ENCODE measurements at regions of chr17 and their contacts with region 1.

Region 1: GRCh38 chr17:67475236-67475937 is 98.3 kb downstream of the PITPNC1 start:
- DNase-seq: peak; percentile 91
- ATAC-seq: peak; percentile 76
- H3K4me3 Mint-ChIP-seq: peak overlapping the region; percentile 72
- H3K27ac Mint-ChIP-seq: peak overlapping the region; percentile 94
- H3K4me1 Mint-ChIP-seq: peaks cover 72% of the 10 kb centered on the region
- H3K27me3 Mint-ChIP-seq: no peaks in the 10 kb centered on the region

Region 2: DNA sequence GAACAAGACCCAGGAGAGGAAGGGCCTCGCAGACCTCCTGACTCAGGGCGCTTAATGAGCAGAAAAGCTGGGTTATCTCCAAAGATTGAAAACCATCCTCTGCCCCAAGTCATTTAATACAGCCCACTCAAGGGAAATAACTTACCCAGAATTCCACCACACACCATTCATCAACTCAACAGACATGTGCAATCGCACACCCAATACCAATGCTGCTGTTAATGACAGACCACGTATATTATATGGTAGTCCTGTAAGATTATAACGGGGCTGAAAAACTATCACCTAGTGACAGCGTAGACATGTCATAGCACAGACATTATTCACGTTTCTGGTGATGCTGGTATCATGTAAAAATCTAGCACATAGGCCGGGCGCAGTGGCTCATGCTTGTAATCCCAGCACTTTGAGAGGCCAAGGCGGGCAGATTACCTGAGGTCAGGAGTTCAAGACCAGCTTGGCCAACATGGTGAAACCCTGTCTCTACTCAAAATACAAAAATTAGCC is 177.9 kb before region 1 on chr17:
- CTCF ChIA-PET with region 1: no interaction called
- POLR2A ChIA-PET with region 1: no interaction called
- DNase-seq: no peak
- ATAC-seq: no peak
- H3K4me3 Mint-ChIP-seq: no peak overlapping the region
- H3K27ac Mint-ChIP-seq: no peak overlapping the region
- H3K4me1 Mint-ChIP-seq: peaks cover 7% of the 10 kb centered on the region
- H3K27me3 Mint-ChIP-seq: no peaks in the 10 kb centered on the region

Region 3: GRCh38 chr17:67401598-67402488 is 73.5 kb before region 1 on chr17:
- CTCF ChIA-PET with region 1: interaction called, 11 read pairs
- POLR2A ChIA-PET with region 1: interaction called, 4 read pairs
- DNase-seq: no peak
- ATAC-seq: peak; percentile 48
- H3K4me3 Mint-ChIP-seq: peak overlapping the region; percentile 59
- H3K27ac Mint-ChIP-seq: peak overlapping the region; percentile 85
- H3K4me1 Mint-ChIP-seq: peaks cover 73% of the 10 kb centered on the region
- H3K27me3 Mint-ChIP-seq: no peaks in the 10 kb centered on the region

Region 4: DNA sequence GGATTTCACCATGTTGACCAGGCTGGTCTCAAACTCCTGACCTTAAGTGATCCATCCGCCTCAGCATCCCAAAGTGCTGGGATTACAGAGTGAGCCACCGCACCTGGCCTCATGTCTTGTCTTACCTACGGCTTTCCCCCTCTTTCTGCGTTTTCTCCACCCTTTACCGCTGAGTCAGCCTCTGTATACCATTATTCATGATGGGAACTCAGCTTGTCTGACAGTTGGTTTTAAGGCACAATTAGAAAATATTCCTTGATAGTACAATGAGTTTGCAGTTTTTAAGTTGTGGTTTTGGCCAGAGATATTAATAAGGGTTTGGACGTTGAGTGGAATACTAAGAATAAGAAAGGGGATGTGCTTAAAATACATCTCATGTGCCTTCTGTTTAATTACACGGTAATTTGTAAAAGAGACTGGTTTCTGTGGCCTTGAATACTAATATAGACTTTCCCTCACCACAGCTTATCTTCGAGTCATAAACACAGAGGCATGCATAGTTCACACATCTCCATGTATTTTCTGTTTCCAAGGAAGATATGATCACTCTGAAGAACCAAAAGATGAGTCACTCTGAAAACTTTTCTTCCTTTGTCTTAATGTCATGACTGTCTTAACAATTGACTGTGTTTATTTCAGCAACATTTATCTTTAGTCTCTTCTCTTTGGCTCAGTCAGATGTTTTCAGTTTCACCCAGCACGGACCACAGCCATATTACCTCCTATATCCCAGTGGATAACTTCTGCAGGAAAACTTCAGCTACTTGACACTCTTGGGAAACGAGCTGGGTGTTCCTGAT is 43.9 kb before region 1 on chr17:
- CTCF ChIA-PET with region 1: interaction called, 65 read pairs
- POLR2A ChIA-PET with region 1: interaction called, 8 read pairs
- DNase-seq: no peak
- ATAC-seq: peak; percentile 31
- H3K4me3 Mint-ChIP-seq: peak overlapping the region; percentile 20
- H3K27ac Mint-ChIP-seq: peak overlapping the region; percentile 39
- H3K4me1 Mint-ChIP-seq: peaks cover 73% of the 10 kb centered on the region
- H3K27me3 Mint-ChIP-seq: no peaks in the 10 kb centered on the region

Region 5: GRCh38 chr17:67452681-67453554 is 22.5 kb before region 1 on chr17:
- CTCF ChIA-PET with region 1: interaction called, 57 read pairs
- POLR2A ChIA-PET with region 1: interaction called, 31 read pairs
- DNase-seq: peak; percentile 68
- ATAC-seq: peak; percentile 84
- H3K4me3 Mint-ChIP-seq: peak overlapping the region; percentile 67
- H3K27ac Mint-ChIP-seq: peak overlapping the region; percentile 96
- H3K4me1 Mint-ChIP-seq: peaks cover 88% of the 10 kb centered on the region
- H3K27me3 Mint-ChIP-seq: no peaks in the 10 kb centered on the region

Region 6: DNA sequence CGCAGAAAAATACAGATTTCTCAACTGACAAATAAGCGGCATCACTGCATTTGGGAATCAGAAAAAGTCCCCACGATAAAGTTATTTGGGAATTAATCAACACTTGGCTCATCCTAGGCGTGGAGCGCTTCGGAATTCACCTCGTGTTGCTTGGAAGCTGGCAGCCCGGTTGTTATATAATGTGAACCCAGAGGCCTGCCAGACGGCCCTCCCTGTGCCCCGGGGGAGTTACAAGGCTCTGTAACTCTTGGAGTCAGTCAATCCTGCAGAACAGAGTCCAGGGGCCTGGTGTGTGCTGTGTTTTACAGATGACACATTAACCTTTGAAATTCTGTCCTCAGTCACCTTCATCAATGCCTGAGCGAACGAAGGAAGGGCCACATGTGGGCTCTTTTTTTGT is 12.8 kb after region 1 on chr17:
- CTCF ChIA-PET with region 1: interaction called, 17 read pairs
- POLR2A ChIA-PET with region 1: interaction called, 4 read pairs
- DNase-seq: no peak
- ATAC-seq: no peak
- H3K4me3 Mint-ChIP-seq: no peak overlapping the region
- H3K27ac Mint-ChIP-seq: no peak overlapping the region
- H3K4me1 Mint-ChIP-seq: peaks cover 64% of the 10 kb centered on the region
- H3K27me3 Mint-ChIP-seq: no peaks in the 10 kb centered on the region

Region 7: DNA sequence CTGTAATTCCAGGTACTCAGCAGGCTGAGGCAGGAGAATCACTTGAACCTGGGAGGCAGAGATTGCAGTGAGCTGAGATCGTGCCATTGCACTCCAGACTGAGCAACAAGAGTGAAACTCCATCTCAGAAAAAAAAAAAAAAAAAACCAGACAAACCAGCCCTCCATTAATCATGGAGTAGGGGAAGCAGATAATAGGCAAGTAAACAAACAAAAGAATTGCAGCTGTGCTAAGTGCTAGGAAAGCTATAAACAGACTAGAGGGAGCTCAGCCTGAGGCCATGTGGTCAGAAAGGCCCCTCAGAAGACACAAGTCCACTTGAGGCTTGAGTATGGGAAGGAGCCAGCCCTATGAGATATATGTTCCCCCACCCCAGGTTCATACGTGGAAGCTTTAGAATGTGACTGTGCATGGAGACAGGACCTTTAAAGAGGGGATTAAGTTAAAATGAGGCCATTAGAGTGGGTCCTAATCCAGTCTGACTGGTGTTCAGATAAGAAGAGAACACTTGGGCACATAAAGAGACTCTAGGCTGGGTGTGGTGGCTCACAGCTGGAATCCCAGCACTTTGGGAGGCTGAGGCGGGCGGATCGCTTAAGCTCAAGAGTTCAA is 109.7 kb after region 1 on chr17:
- CTCF ChIA-PET with region 1: no interaction called
- POLR2A ChIA-PET with region 1: no interaction called
- DNase-seq: no peak
- ATAC-seq: no peak
- H3K4me3 Mint-ChIP-seq: no peak overlapping the region
- H3K27ac Mint-ChIP-seq: no peak overlapping the region
- H3K4me1 Mint-ChIP-seq: no peaks in the 10 kb centered on the region
- H3K27me3 Mint-ChIP-seq: no peaks in the 10 kb centered on the region

Measured in activated CD8-positive, alpha-beta T cell treated with anti-CD3 and anti-CD28 coated beads, Interleukin-2, amount 10 ng/mL, durations not matched to agents 7 days and 5 days (primary cell).